ENCODE measurements at regions of chr12 and their contacts with region 1.

Region 1: GRCh38 chr12:72346363-72346944 is 74.3 kb downstream of the TRHDE start:
- DNase-seq: peak; percentile 68
- H3K4me3 Mint-ChIP-seq: no peak overlapping the region
- H3K27ac Mint-ChIP-seq: no peak overlapping the region
- H3K4me1 Mint-ChIP-seq: no peaks in the 10 kb centered on the region
- H3K27me3 Mint-ChIP-seq: no peaks in the 10 kb centered on the region

Region 2: DNA sequence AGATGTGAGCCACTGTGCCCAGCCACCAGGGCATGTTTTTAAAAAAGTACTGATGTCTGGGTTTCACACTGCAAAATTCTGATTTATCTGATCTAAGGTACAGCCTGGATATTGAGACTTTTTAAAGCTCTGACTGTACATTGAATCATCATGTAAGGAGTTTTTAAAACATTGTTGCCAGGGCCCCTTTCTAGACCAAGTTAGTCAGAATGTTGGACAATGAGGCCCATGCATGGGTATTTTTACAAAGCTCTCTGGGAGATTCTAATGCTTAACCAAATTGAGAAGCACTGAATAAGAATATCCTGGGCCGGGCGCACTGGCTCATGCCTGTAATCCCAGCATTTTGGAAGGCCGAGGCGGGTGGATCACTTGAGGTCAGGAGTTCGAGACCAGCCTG is 643.9 kb before region 1 on chr12:
- CTCF ChIA-PET with region 1: no interaction called
- intact Hi-C with region 1: no loop called
- DNase-seq: no peak
- H3K4me3 Mint-ChIP-seq: no peak overlapping the region
- H3K27ac Mint-ChIP-seq: no peak overlapping the region
- H3K4me1 Mint-ChIP-seq: no peaks in the 10 kb centered on the region
- H3K27me3 Mint-ChIP-seq: no peaks in the 10 kb centered on the region

Region 3: GRCh38 chr12:74317078-74317601 is 1970.7 kb after region 1 on chr12:
- CTCF ChIA-PET with region 1: no interaction called
- intact Hi-C with region 1: loop called (anchors 5 kb)
- DNase-seq: no peak
- H3K4me3 Mint-ChIP-seq: no peak overlapping the region
- H3K27ac Mint-ChIP-seq: no peak overlapping the region
- H3K4me1 Mint-ChIP-seq: no peaks in the 10 kb centered on the region
- H3K27me3 Mint-ChIP-seq: no peaks in the 10 kb centered on the region

Measured in activated naive CD4-positive, alpha-beta T cell treated with anti-CD3 and anti-CD28 coated beads for 36 hours (primary cell).